ENCODE measurements at regions of chr3 and their contacts with region 1.

Region 1: GRCh38 chr3:128335324-128336201 is 131.1 kb downstream of the DNAJB8 start:
- DNase-seq: peak; percentile 57 to 64
- H3K4me3 ChIP-seq: no peak overlapping the region
- H3K27ac ChIP-seq: no peak overlapping the region
- H3K4me1 ChIP-seq: peaks cover 24% of the 10 kb centered on the region
- H3K27me3 ChIP-seq: no peaks in the 10 kb centered on the region
- CTCF ChIP-seq: no peak

Region 2: DNA sequence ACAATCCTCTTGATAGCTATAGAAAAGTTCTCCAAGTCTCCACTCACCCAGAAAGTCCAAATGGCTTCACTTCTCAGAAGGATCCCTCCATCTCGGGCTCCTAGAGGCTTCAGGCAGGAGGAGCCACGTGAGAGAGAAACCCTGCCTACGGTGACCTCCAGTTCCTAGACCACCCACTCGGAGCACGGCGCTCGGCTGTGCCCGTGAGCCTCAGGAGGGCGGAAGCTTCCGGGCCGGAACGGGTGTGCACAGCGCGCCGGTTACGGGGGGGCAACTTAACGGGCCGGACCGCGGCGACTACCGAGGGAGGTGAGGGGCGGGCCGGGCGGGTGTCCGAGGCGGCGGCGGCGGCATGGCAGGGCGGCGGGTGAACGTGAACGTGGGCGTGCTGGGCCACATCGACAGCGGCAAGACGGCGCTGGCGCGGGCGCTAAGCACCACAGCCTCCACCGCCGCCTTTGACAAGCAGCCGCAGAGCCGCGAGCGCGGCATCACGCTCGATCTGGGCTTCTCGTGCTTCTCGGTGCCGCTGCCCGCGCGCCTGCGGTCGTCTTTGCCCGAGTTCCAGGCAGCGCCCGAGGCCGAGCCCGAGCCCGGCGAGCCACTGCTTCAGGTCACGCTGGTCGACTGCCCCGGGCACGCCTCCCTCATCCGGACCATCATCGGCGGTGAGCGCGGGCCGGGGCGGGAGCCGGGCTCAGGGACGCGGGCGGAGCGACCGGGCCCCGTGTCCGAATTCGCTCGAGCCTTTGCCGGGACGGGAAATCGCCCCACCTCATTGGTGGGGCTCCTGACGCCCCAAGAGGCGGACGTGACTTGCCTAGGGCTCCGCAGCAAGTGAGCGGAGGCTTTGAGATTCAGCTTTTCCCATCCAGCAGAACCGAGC is 182.2 kb before region 1 on chr3 and contains the start of gene EEFSEC:
- CTCF ChIA-PET with region 1: no interaction called
- POLR2A ChIA-PET with region 1: interaction called, 15 read pairs
- intact Hi-C with region 1: no loop called
- DNase-seq: peak; percentile 61 to 88
- H3K4me3 ChIP-seq: peak within 1 kb of the TSS; percentile 96
- H3K27ac ChIP-seq: peak within 1 kb of the TSS; percentile 70
- H3K4me1 ChIP-seq: peaks cover 9% of the 10 kb centered on the region
- H3K27me3 ChIP-seq: no peaks in the 10 kb centered on the region
- CTCF ChIP-seq: no peak
- total RNA-seq, gene EEFSEC: 21.0 and 21.3 TPM in 2 replicates

Region 3: GRCh38 chr3:128383316-128384235 is 48.0 kb after region 1 on chr3:
- CTCF ChIA-PET with region 1: no interaction called
- POLR2A ChIA-PET with region 1: no interaction called
- intact Hi-C with region 1: no loop called
- DNase-seq: peak; percentile 83 to 95
- H3K4me3 ChIP-seq: no peak overlapping the region
- H3K27ac ChIP-seq: peak overlapping the region; percentile 62
- H3K4me1 ChIP-seq: peaks cover 31% of the 10 kb centered on the region
- H3K27me3 ChIP-seq: no peaks in the 10 kb centered on the region
- CTCF ChIP-seq: no peak

Region 4: GRCh38 chr3:128578346-128578745 is 242.8 kb after region 1 on chr3:
- CTCF ChIA-PET with region 1: interaction called, 12 read pairs
- POLR2A ChIA-PET with region 1: no interaction called
- intact Hi-C with region 1: no loop called
- DNase-seq: no peak
- H3K4me3 ChIP-seq: no peak overlapping the region
- H3K27ac ChIP-seq: no peak overlapping the region
- H3K4me1 ChIP-seq: no peaks in the 10 kb centered on the region
- H3K27me3 ChIP-seq: no peaks in the 10 kb centered on the region
- CTCF ChIP-seq: no peak

Measured in PC-9 (cell line).